ENCODE measurements at regions of chrX and their contacts with region 1.

Region 1: GRCh38 chrX:111445486-111445885 is 33.5 kb upstream of the DCX start:
- DNase-seq: no peak
- H3K4me3 ChIP-seq: no peak overlapping the region
- H3K27ac ChIP-seq: no peak overlapping the region
- H3K4me1 ChIP-seq: no peaks in the 10 kb centered on the region
- H3K27me3 ChIP-seq: no peaks in the 10 kb centered on the region
- CTCF ChIP-seq: peak; percentile 65

Region 2: DNA sequence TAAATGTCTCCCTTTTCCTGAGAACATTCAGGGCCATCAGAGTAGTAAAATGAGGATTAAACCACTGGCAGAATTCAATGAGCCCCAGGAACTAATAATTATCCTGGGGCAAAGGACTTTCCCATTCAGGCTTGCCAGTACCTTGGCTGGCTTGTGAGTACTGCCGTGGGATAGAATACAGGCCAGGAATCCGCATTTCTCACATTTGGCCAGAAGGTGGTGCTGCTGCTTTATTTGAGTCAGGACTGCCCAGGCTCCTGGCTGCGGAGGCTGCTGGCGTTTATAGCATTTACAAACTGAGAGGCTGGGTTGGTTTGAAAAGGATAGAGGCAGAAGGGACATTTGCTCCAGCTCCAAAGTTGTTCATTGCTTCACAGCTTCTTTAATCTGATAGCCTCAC is 995.4 kb before region 1 on chrX:
- CTCF ChIA-PET with region 1: no interaction called
- POLR2A ChIA-PET with region 1: no interaction called
- intact Hi-C with region 1: loop called (anchors 10 kb)
- DNase-seq: peak; percentile 55 to 75
- H3K4me3 ChIP-seq: no peak overlapping the region
- H3K27ac ChIP-seq: no peak overlapping the region
- H3K4me1 ChIP-seq: no peaks in the 10 kb centered on the region
- H3K27me3 ChIP-seq: peaks cover 47% of the 10 kb centered on the region
- CTCF ChIP-seq: peak; percentile 89

Region 3: GRCh38 chrX:110853610-110854009 is 591.9 kb before region 1 on chrX:
- CTCF ChIA-PET with region 1: no interaction called
- POLR2A ChIA-PET with region 1: no interaction called
- intact Hi-C with region 1: loop called (anchors 5 kb)
- DNase-seq: no peak
- H3K4me3 ChIP-seq: no peak overlapping the region
- H3K27ac ChIP-seq: no peak overlapping the region
- H3K4me1 ChIP-seq: peaks cover 6% of the 10 kb centered on the region; the same call in 1 of the 2 replicates
- H3K27me3 ChIP-seq: no peaks in the 10 kb centered on the region
- CTCF ChIP-seq: peak; percentile 69

Region 4: GRCh38 chrX:112025753-112026152 is 580.3 kb after region 1 on chrX:
- CTCF ChIA-PET with region 1: no interaction called
- POLR2A ChIA-PET with region 1: no interaction called
- intact Hi-C with region 1: no loop called
- DNase-seq: no peak
- H3K4me3 ChIP-seq: no peak overlapping the region
- H3K27ac ChIP-seq: no peak overlapping the region
- H3K4me1 ChIP-seq: no peaks in the 10 kb centered on the region
- H3K27me3 ChIP-seq: no peaks in the 10 kb centered on the region
- CTCF ChIP-seq: no peak

Measured in PC-9 (cell line).